ENCODE measurements at regions of chr11 and their contacts with region 1.

Region 1: DNA sequence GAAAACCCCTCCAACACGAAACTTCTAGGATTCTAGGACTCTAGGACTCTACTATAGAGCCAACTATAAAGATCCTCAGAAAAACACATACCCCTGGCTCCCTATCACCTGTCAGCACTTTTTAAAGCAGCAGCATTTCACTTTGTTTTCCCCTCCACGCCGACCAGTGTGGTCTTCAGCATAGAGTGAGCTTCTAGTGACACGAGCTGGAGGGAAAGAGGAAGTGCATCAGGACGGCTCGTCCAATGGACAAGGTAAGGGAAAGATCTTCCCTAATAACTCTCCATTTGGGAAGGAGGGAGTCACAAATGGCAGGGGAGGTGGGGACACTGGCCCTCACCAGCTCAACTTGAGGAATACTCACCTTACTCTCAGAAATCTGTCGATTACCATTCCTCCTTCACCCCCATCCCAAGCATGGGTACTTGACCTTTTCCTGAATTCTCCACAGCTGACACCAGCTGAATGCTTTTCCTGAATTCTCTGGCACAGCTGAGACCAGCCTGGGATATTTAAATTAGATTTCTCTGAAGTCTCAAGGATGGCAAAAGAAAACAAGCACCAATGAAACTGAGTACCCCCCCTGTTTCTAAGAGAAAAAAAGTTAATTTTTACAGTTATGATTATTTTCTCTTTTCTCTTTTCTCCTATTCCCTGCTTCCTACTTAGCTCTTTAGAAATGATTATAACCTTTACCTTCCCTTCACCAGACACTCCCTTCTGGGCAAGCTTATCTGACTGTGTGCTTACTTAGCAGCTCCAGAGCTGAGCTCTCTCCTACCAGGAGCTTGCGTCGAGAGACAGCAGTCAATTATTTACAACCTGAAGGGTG is 33.3 kb upstream of the NNMT start:
- DNase-seq: peak; percentile 34
- CTCF ChIP-seq: peak; percentile 32

Region 2: DNA sequence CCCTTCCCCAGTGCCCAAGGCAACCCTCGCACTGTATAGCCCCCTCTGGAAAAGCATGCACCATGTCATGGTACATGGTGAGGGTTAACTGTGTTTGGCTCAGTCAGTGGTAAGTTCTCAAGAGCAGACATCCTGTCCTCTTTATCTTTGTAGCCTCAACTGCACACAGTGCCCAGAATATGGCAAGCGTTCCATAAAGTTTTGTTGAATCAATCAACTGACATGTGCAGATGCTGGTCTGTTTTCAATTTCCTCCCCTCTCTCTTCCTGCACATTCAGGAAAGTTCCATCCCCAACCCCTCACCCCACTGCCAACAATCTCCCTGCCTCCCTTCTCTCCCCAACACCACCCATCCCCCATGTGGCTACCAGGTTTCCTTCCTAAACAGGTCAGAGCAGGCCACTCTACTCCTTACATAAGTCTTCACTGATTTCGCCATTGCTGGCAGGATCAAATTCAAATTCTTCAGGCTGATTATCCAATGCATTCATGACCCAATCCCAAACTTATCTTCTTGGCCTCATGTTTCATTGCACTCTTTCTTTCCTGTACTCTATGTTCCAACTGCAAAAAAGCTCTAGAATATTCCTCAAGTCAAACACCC is 541.3 kb before region 1 on chr11:
- in situ Hi-C with region 1: no loop called
- DNase-seq: no peak
- CTCF ChIP-seq: no peak

Region 3: GRCh38 chr11:113806406-113806805 is 456.5 kb before region 1 on chr11:
- in situ Hi-C with region 1: loop called (anchors 25 kb)
- DNase-seq: no peak
- CTCF ChIP-seq: peak; percentile 74

Region 4: DNA sequence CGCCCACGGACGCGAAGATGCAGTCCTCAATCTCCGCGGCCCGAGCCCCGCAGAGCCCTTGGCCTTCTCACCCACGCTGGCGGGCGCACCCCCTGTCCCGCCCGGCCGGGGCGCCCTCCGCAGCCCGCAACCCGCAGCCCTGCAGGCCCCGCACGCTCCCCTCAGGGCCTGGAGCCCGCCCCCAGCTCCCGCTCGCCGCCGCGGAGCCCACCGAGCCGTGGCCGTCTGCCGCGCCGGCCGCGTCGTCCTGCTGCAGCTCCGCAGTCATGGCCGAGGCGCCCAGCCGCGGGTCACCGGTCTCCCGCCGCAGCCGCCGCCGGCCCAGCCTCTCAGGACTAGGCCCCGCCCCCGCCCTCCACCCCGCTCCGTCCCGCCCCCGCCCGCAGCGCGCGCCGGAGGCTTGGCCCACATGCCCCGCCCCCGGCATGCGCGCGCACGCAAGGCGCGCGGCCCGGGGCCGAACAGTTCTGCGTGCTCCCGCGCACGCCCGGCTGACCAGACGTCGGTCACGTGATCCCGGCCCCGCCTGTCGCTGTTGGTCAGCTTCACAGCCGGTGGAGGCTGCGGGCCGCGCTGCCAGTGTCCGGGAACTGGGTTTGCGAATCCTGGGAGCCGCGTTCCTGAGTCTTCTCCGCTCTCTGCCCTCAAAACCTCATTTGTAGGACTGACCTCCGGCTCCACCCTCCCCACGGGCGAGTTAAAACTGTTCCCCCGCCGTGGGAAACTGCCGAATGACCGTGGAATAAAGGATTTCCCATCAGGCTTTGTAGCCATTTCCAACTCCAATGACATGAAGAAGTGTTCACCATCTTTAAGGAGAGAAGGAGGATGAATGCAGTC is 387.4 kb before region 1 on chr11 and contains the start of gene USP28:
- in situ Hi-C with region 1: loop called (anchors 25 kb)
- DNase-seq: peak; percentile 98
- CTCF ChIP-seq: peak; percentile 25

Region 5: DNA sequence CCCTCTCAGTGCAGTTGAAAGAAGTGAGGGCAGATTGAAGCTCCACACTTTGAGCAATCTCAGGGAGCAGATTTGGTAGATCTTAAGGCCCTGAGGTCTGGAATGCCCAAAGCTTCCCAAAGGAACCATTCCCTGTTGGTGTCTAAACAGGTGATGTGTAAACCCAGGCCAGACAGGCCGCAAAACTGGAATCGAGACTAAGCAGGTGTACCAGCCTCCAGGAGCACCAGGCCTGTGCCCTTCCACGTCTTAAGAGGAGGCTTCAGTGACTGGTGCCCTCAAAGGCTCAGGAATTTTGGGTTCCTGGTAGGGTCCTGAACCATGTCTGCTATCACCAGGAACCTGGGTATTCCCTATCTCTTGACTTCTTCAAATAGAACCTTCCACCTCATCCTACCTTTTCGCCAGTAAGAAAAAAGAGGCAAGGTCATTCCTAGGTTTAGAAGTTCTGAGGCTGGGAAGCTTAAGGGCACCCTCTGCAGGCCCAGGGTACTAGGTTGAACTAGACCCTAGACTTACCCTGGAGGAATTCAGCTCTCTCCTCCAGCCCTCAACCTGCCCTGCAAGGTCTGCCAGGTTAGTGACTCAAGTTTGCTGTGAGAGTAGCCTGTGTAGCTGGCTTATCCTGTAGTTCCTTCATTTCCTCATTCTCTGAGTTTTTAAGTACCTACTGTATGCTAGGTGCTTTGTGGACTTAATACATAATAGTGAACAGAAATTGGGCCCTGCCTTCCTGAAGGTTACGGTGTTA is 66.7 kb before region 1 on chr11:
- in situ Hi-C with region 1: no loop called
- DNase-seq: peak; percentile 26
- CTCF ChIP-seq: no peak

Measured in GM13977 (cell line).